Activated CD4-positive, alpha-beta T cell treated with anti-CD3 and anti-CD28 coated beads for 36 hours (primary cell): ENCODE measurements at regions of chr10 and their contacts with region 1.

Region 1: GRCh38 chr10:3226960-3227744 is 54.6 kb upstream of the PITRM1 start:
- DNase-seq: no peak
- ATAC-seq: peak; percentile 18
- H3K4me3 Mint-ChIP-seq: no peak overlapping the region
- H3K27ac Mint-ChIP-seq: no peak overlapping the region
- H3K4me1 Mint-ChIP-seq: peaks cover 20% of the 10 kb centered on the region
- H3K27me3 Mint-ChIP-seq: peaks cover 8% of the 10 kb centered on the region

Region 2: DNA sequence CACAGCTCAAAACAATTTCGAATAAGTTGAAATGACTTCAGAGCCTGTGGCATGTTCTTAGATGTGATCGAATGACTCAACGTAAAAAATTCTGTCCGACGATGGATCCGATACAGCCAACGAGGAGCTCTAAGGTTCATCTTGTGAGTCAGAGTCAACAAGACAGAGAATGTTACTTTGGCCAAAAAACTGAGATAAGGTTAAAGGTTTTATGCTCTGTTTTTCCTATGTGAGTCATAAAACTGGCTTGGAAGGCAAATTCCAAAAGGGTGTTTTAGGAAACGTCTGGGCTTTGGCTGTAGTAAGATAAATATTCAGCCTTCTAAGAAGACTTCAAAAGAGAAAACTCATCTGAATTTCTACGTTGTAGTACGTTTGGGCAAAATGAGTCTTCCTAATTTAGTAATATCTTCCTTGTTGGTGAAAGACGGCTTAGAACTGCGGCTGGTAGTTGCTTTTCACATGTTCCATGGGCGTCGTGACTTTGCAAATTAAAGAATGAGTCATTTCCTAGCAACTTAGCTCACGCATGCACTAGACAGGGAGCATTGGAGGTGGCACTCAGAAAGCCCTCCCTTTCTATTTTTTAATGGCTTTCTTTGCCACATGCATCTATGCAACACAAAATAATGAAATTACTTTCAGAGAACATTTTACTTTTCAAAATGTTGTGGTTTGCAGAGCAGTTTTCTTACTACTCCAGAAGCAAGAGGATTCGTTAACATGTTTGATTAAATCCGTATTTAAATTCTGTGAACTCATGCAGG is 131.6 kb before region 1 on chr10:
- CTCF ChIA-PET with region 1: no interaction called
- POLR2A ChIA-PET with region 1: no interaction called
- intact Hi-C with region 1: loop called in 1 of 2 experiments (anchors 2 kb)
- DNase-seq: peak; percentile 80
- ATAC-seq: peak; percentile 86
- H3K4me3 Mint-ChIP-seq: peak overlapping the region; percentile 15
- H3K27ac Mint-ChIP-seq: peak overlapping the region; percentile 83
- H3K4me1 Mint-ChIP-seq: peaks cover 55% of the 10 kb centered on the region
- H3K27me3 Mint-ChIP-seq: no peaks in the 10 kb centered on the region

Region 3: DNA sequence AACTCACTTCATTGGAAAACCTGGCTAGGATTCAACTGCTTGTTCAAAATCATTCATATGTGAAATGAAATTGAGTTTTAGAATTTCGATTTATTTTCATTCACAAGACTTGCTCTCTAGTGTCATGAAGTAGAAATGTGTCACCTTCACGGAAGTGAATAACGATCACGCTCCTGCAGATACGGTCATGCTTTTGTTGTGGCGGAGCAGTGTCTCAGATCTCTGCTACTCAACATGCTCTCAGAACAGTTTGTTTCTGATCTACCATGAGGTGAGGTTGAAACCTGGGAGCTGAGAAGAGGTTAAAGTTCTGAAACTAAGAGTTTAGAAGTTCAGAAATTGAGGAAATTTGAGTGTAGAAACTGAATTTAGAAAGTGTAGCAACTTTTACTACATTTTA is 40.8 kb before region 1 on chr10:
- CTCF ChIA-PET with region 1: no interaction called
- POLR2A ChIA-PET with region 1: no interaction called
- intact Hi-C with region 1: no loop called
- DNase-seq: peak; percentile 79
- ATAC-seq: peak; percentile 100
- H3K4me3 Mint-ChIP-seq: no peak overlapping the region
- H3K27ac Mint-ChIP-seq: no peak overlapping the region
- H3K4me1 Mint-ChIP-seq: peaks cover 20% of the 10 kb centered on the region
- H3K27me3 Mint-ChIP-seq: peaks cover 26% of the 10 kb centered on the region

Region 4: DNA sequence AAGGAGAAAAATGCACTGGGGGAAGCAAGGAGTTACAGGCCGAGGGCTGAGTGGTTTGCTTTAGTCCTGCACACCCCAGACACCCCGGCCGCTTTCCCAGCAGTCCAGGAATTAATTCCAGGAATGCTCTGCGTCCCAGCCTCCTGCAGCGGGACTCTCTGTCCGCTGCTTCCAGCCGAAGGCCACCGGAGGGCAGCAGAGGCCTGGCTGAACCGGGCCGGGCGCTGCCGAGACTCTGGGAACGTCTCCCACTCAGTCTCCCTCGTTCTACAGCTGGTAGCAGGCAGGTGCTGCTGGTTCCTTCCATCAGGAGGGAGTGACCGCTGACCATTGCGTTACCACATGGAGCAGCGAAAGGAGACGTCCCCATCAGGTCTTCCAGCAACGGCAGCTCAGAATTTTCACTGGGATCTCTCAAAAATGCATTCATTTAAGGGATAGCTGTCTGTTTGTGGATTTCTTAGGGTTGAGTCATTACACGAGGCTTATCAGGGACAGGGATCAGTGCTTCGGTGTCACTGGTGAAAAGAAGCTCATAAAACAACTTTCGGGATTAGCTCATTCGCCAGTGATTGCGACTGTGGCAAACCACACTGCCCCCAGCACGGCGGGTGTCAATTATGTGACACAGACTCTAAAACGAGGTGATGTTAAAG is 29.7 kb before region 1 on chr10:
- CTCF ChIA-PET with region 1: interaction called, 6 read pairs
- POLR2A ChIA-PET with region 1: interaction called, 10 read pairs
- intact Hi-C with region 1: loop called (anchors 1 kb)
- DNase-seq: peak; percentile 92
- ATAC-seq: peak; percentile 90
- H3K4me3 Mint-ChIP-seq: no peak overlapping the region
- H3K27ac Mint-ChIP-seq: no peak overlapping the region
- H3K4me1 Mint-ChIP-seq: peaks cover 11% of the 10 kb centered on the region
- H3K27me3 Mint-ChIP-seq: peaks cover 60% of the 10 kb centered on the region

Region 5: DNA sequence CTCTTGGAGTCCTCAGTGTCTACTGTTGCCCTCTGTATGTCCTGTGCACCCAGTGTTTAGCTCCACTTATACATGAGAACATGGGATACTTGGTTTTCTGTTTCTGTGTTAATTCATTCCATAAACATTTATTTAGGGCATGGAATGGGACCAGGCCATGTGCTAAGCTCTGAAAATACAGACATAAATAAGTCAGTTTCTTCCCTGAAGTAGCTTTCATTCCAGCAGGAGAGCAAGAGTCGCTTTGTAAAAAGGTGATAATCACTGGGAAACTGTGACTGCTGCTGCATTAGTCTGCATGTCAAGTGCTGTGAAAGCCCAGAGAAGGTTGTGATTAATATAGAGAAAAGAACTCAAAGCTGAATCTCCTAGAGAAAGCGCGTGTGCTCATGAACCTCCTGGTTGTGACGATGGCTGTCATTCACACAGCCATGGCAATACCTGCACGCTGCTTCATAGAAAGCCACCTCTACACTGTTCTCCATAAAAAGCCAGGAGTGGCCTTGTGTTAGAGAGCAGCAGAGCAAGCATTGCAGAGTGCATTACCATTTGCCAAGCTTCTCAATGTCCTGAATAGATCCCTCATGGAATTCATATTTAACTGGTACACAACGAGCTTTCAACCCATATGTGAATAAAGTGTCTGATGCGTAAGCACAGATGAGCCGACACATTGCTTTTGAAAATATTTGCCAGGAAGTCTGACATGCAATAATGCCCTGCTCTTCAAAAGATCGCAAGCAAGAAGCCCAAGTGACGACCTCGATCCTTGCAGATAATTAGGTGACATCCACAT is 23.9 kb before region 1 on chr10:
- CTCF ChIA-PET with region 1: no interaction called
- POLR2A ChIA-PET with region 1: interaction called, 10 read pairs
- intact Hi-C with region 1: loop called in 1 of 2 experiments (anchors 1 kb)
- DNase-seq: no peak
- ATAC-seq: peak; percentile 86
- H3K4me3 Mint-ChIP-seq: no peak overlapping the region
- H3K27ac Mint-ChIP-seq: no peak overlapping the region
- H3K4me1 Mint-ChIP-seq: peaks cover 7% of the 10 kb centered on the region
- H3K27me3 Mint-ChIP-seq: peaks cover 65% of the 10 kb centered on the region

Region 6: DNA sequence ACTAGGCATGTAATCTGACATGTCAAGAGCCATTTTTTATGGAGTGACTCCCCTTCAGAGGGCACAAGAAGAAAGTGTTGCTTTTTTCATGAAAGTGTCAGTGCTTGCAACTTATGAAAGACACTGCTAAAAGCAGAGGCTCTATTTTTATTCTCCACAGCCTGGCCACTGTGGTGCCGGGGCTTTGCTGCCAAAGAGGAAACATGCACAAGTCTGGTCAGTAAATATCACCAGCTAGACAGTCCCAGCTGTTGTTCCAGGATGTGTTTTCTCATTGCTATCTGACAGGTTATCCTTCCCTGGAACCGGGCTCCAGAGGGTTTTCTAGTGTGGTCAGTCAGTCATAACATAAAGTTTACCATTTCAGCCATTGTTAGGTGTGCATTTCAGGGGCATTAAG is 126.1 kb after region 1 on chr10:
- CTCF ChIA-PET with region 1: no interaction called
- POLR2A ChIA-PET with region 1: no interaction called
- intact Hi-C with region 1: no loop called
- DNase-seq: no peak
- ATAC-seq: no peak
- H3K4me3 Mint-ChIP-seq: no peak overlapping the region
- H3K27ac Mint-ChIP-seq: no peak overlapping the region
- H3K4me1 Mint-ChIP-seq: peaks cover 3% of the 10 kb centered on the region
- H3K27me3 Mint-ChIP-seq: peaks cover 13% of the 10 kb centered on the region

Region 7: GRCh38 chr10:4344511-4344994 is 1117.4 kb after region 1 on chr10:
- CTCF ChIA-PET with region 1: no interaction called
- POLR2A ChIA-PET with region 1: no interaction called
- intact Hi-C with region 1: loop called in 1 of 2 experiments (anchors 1 kb)
- DNase-seq: peak; percentile 64
- ATAC-seq: peak; percentile 95
- H3K4me3 Mint-ChIP-seq: no peak overlapping the region
- H3K27ac Mint-ChIP-seq: no peak overlapping the region
- H3K4me1 Mint-ChIP-seq: peaks cover 24% of the 10 kb centered on the region
- H3K27me3 Mint-ChIP-seq: no peaks in the 10 kb centered on the region